Calu3 (cell line): ENCODE measurements at regions of chr19 and their contacts with region 1.

Region 1: DNA sequence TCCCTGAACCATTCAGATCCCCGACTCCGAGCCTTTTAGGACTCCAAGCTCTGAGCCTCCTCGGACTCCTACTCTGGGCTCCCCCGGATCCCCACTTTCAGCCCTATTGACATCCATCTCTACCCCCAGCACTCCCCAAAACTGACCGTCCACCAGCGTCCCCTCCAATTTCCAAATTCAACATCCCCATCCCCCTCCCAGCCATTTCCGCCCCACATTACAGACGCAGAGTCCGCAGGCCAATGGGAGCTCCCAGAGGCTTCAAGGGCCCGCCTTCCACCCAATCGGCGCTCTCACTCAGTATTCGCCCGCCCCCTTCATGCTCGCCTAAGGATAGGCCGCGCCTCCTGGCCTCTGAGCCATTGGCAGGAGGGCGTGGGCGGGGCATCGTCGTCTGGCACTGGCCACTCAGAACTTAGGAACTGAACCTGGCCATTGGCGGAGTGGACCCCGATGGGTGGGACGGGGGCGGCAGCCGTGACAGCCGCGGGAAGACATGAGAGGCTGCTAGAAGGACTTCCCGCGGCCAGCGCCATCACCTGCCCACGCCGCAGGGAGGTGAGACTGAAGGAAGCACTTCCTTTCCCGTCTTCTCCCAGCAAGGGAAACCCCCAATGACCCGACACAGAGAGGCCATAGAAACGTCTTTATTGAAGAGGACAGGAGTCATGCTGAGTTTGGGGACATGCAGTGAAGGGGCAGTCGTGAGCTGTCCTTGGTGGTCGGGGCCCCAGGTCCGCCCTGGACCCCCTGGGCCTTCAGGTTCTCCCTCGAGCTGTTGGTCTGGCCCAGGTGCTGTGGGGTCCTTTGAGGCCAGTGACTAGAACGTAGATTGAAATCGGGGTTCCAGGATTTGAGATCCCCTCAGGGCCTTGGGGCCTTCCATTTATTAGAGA is at the start of gene ALKBH6:
- DNase-seq: peak; percentile 100
- H3K4me3 Mint-ChIP-seq: peak within 1 kb of the TSS; percentile 89
- H3K27ac Mint-ChIP-seq: peak within 1 kb of the TSS; percentile 81
- H3K4me1 Mint-ChIP-seq: peaks cover 39% of the 10 kb centered on the region
- H3K27me3 Mint-ChIP-seq: no peaks in the 10 kb centered on the region
- CTCF ChIP-seq: no peak
- total RNA-seq, gene ALKBH6: 52.6 and 56.7 TPM in 2 replicates

Region 2: DNA sequence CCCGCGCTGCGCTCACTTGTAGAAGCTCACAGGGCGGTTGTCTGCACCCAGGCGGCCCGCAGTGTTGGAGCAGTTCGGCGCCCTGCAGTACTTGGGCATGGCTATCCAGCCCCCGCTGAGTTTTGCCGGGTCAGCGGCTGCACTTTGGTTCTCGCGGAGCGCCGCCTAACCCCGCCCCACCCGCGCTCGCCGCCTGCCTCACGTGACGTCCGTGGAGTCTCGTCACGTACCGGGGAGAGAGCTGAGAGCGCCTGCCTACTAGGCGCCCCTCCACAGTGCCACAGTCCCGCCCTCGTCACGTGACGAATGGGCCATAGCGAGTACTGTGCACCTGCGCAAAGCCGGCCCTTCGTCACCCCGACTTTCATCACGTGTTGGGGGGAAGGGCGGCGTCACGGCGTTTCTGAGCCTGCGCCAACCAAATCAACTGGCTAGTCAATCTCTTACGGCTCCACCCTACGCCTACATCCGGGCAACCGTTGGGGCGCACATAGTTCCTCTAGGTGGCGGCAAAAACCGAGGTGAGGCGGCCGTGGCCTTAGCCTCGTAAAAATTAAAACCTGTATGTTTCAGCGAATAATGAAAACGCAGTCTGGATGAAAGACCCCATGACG is 39.9 kb after region 1 on chr19 and contains the start of gene THAP8:
- CTCF ChIA-PET with region 1: interaction called, 7 read pairs
- intact Hi-C with region 1: loop called (anchors 5 kb)
- DNase-seq: peak; percentile 99
- H3K4me3 Mint-ChIP-seq: peak within 1 kb of the TSS; percentile 77
- H3K27ac Mint-ChIP-seq: peak within 1 kb of the TSS; percentile 40
- H3K4me1 Mint-ChIP-seq: peaks cover 28% of the 10 kb centered on the region
- H3K27me3 Mint-ChIP-seq: no peaks in the 10 kb centered on the region
- CTCF ChIP-seq: peak; percentile 36
- total RNA-seq, gene THAP8: 3.2 and 3.3 TPM in 2 replicates